ENCODE measurements at regions of chr1 and their contacts with region 1.

Region 1: GRCh38 chr1:244599937-244600350 is 53.0 kb upstream of the DESI2 start:
- DNase-seq: peak; percentile 97
- H3K4me3 Mint-ChIP-seq: peak overlapping the region; percentile 77
- H3K27ac Mint-ChIP-seq: peak overlapping the region; percentile 99
- H3K4me1 Mint-ChIP-seq: peaks cover 12% of the 10 kb centered on the region
- H3K27me3 Mint-ChIP-seq: no peaks in the 10 kb centered on the region
- CTCF ChIP-seq: no peak

Region 2: DNA sequence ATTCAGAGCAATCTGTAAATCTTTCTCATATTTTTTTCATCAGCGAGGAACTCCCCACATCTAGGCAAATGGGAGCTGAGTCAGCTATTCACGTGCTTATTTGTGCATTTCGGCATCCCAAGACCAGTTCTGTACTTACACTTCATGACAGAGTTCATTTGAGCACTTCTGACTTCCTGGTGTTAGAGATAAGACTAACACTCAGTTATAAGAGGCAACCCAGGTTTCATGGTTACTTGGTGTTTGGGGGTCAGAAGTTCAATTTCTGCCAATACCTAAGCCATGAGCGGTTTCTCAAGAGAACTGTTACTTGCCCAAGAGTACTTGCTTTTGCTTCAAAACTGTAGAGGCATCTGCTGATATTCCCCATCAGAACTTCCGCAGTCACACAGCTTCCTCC is 28.8 kb after region 1 on chr1:
- CTCF ChIA-PET with region 1: interaction called, 18 read pairs
- POLR2A ChIA-PET with region 1: interaction called, 5 read pairs
- intact Hi-C with region 1: no loop called
- DNase-seq: no peak
- H3K4me3 Mint-ChIP-seq: no peak overlapping the region
- H3K27ac Mint-ChIP-seq: no peak overlapping the region
- H3K4me1 Mint-ChIP-seq: no peaks in the 10 kb centered on the region
- H3K27me3 Mint-ChIP-seq: no peaks in the 10 kb centered on the region
- CTCF ChIP-seq: no peak

Region 3: DNA sequence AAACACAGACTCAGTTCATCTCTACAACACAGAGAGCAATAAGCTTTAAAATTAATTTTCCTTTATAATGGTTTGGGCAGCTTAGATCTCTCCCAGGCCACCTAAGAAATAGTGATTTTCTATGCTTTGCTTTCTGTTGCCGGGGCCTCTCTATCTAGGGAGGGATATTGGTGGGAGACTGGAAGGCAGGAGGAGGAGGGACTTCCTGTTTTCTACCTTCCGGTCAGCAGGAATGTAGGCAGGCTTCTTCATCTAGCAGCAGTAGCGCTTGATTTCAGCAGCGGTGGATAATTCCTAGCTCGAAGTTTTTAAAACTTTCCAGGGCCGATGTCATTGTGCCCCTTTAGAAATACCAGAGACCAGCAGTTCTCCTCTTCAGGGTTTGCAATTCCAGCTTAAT is 47.9 kb after region 1 on chr1:
- CTCF ChIA-PET with region 1: interaction called, 17 read pairs
- POLR2A ChIA-PET with region 1: interaction called, 20 read pairs
- intact Hi-C with region 1: loop called (anchors 1 kb)
- DNase-seq: no peak
- H3K4me3 Mint-ChIP-seq: no peak overlapping the region
- H3K27ac Mint-ChIP-seq: no peak overlapping the region
- H3K4me1 Mint-ChIP-seq: peaks cover 8% of the 10 kb centered on the region
- H3K27me3 Mint-ChIP-seq: peaks cover 8% of the 10 kb centered on the region
- CTCF ChIP-seq: no peak

Region 4: GRCh38 chr1:244778361-244778760 is 178.4 kb after region 1 on chr1:
- CTCF ChIA-PET with region 1: interaction called, 10 read pairs
- POLR2A ChIA-PET with region 1: interaction called, 4 read pairs
- intact Hi-C with region 1: no loop called
- DNase-seq: peak; percentile 92
- H3K4me3 Mint-ChIP-seq: no peak overlapping the region
- H3K27ac Mint-ChIP-seq: no peak overlapping the region
- H3K4me1 Mint-ChIP-seq: peaks cover 9% of the 10 kb centered on the region
- H3K27me3 Mint-ChIP-seq: no peaks in the 10 kb centered on the region
- CTCF ChIP-seq: no peak

Region 5: DNA sequence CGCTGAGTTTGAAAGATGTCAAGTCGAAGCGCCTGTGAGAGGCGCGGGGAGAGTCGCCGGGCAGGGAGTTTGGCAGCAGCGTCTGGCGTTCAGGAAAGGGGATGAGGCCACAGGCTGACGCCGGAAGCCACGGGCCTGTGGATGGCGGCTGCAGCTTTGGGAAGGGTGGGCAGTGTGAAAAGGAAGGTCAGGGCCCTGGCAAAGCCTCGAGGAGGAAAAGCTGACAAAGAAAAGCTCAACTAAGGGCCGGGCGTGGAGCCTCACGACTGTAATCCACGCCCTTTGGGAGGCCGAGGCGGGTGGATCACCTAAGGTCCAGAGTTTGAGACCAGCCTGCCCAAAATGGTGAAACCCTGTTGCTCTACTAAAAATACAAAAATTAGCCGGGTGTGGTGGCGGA is 210.3 kb after region 1 on chr1:
- CTCF ChIA-PET with region 1: interaction called, 21 read pairs
- POLR2A ChIA-PET with region 1: no interaction called
- intact Hi-C with region 1: no loop called
- DNase-seq: no peak
- H3K4me3 Mint-ChIP-seq: no peak overlapping the region
- H3K27ac Mint-ChIP-seq: no peak overlapping the region
- H3K4me1 Mint-ChIP-seq: no peaks in the 10 kb centered on the region
- H3K27me3 Mint-ChIP-seq: no peaks in the 10 kb centered on the region
- CTCF ChIP-seq: no peak

Region 6: DNA sequence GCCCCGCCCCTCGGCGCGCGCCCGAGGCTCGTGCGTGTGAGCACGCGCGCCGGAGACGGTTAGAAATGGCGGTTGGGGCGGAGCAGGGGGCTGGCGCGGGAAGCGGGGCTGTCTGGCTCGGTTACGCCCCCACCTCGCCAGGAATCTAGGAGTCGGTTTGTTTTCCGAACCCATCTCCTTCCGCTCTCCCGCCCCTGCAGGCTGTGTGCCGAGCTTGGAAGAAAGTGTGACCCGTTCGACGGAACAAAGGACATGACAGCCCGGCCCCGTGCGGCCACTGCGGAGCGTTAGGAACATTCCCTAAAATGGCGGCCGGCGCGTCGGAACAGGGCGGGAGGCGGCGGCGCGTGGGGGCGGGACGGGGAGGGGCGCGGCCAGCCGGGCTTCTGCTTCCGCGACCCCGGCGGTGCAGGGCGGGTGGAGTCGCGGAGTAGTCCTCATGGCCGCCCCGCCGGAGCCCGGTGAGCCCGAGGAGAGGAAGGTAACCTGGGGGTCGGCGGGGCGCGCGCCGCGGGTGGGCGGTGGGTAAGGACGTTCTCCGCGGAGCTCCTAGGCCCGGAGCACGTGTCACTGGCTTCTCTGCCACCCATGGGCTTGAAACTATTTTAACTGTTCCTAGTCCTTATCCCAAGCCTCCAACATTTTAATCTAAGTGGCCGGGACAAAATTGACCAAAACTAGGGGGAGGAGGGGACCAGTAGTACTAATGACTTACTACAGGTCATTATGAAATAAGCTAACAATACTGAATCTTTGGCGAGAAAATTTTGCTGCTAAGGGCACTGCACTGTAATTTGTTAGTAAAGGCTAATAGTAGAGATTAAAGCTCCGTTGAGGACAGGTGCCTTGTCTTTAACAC is 235.6 kb after region 1 on chr1 and contains the start of gene COX20:
- CTCF ChIA-PET with region 1: interaction called, 8 read pairs
- POLR2A ChIA-PET with region 1: interaction called, 39 read pairs
- intact Hi-C with region 1: loop called (anchors 1 kb)
- DNase-seq: peak; percentile 98
- H3K4me3 Mint-ChIP-seq: peak within 1 kb of the TSS; percentile 81
- H3K27ac Mint-ChIP-seq: peak within 1 kb of the TSS; percentile 99
- H3K4me1 Mint-ChIP-seq: peaks cover 33% of the 10 kb centered on the region
- H3K27me3 Mint-ChIP-seq: no peaks in the 10 kb centered on the region
- CTCF ChIP-seq: no peak
- total RNA-seq, gene COX20: 44.6 and 46.1 TPM in 2 replicates

Region 7: DNA sequence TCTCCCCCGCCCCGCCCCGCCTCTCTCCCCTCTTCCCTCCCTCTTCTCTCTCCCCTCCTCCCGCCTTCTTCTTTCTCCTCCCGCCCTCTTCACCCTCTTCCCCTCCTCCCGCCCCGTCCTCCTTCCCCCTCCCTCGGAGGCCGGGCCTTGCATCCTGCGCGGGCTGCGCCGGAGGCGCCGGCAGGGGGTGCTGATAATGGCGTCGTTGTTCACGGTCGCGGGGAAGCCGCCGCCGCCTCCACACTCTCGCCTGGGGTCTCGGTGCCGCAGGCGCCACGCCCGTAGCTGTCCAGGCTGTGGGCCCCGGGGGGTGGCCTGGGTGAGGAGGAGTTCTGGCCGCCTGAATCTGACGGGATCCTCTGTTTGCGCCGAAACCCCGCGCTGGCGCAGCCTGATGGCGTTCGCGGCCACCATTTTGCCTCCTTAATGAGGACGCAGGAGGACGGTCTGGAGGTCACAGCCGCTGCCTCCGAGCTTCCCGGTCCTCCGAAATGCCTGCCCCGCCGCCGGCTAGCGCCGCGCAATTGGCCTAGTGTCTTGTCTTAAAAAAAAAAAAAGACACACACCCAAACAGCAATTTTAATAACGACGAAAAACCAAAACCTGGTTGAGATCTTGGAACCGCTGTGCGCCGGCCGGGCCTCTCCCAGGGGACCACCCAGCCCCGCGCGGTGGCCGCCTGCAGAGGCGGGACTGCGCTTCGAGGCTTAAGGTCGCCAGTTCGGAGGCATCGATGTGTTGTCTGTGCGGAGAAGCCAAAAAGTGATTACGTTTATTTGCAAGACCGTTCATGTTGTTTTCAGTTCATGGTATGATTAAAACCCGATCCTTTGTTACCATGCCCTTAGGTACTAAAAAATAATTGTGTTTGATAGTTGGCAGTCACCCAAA is 371.0 kb after region 1 on chr1:
- CTCF ChIA-PET with region 1: interaction called, 3 read pairs
- POLR2A ChIA-PET with region 1: interaction called, 7 read pairs
- intact Hi-C with region 1: loop called (anchors 5 kb)
- DNase-seq: peak; percentile 100
- H3K4me3 Mint-ChIP-seq: peak overlapping the region; percentile 98
- H3K27ac Mint-ChIP-seq: peak overlapping the region; percentile 100
- H3K4me1 Mint-ChIP-seq: peaks cover 29% of the 10 kb centered on the region
- H3K27me3 Mint-ChIP-seq: no peaks in the 10 kb centered on the region
- CTCF ChIP-seq: peak; percentile 85

Measured in MCF 10A (cell line).